Activated CD4-positive, alpha-beta memory T cell treated with anti-CD3 and anti-CD28 coated beads for 36 hours (primary cell): ENCODE measurements at regions of chr2 and their contacts with region 1.

Region 1: DNA sequence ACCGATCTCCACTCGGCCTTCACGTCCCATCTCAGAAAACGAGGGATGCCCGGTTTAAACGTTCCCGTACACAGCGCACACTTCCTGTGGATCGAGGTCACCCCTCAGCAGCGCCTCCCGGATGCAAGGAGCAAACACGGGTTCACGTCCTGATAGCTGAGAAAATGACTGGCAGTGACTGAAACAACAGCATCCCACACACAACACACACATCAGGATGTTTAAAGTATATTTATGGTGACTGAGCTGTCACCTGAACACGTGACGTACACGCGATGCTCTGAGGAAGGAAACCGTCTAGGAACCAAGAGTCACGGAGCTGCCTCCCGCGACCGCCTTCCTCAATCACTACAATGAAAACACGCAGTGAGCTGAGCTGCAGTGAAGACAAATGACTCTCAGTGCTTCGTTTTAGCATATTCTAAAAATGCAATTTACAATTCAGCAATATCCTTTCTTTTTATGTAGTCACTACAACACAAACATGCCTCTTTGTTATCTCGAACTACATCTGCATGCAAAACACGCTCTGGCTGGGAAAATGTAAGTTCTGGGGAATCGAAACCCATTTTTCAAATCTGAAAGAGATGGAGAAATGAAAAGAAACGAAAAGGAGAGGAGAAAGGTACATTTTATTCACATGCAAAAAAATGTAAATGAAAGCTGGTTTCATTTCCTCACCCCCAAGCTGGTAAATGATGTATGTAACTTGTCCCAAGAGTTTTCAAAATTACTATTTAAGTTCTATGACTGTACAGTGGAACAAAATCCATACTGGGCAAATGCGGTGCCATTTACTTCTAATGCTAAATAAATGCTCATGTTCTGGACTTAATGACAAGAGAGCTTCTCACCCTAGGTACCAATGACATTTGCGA is 19.8 kb downstream of the HDAC4 start:
- DNase-seq: peak; percentile 85
- H3K4me3 Mint-ChIP-seq: peak overlapping the region; percentile 65
- H3K27ac Mint-ChIP-seq: peak overlapping the region; percentile 94
- H3K4me1 Mint-ChIP-seq: peaks cover 41% of the 10 kb centered on the region
- H3K27me3 Mint-ChIP-seq: no peaks in the 10 kb centered on the region

Region 2: GRCh38 chr2:239257511-239257937 is 123.5 kb before region 1 on chr2:
- CTCF ChIA-PET with region 1: no interaction called
- POLR2A ChIA-PET with region 1: interaction called, 5 read pairs
- intact Hi-C with region 1: loop called (anchors 1 kb)
- DNase-seq: peak; percentile 44
- H3K4me3 Mint-ChIP-seq: no peak overlapping the region
- H3K27ac Mint-ChIP-seq: peak overlapping the region; percentile 79
- H3K4me1 Mint-ChIP-seq: peaks cover 86% of the 10 kb centered on the region
- H3K27me3 Mint-ChIP-seq: no peaks in the 10 kb centered on the region

Region 3: DNA sequence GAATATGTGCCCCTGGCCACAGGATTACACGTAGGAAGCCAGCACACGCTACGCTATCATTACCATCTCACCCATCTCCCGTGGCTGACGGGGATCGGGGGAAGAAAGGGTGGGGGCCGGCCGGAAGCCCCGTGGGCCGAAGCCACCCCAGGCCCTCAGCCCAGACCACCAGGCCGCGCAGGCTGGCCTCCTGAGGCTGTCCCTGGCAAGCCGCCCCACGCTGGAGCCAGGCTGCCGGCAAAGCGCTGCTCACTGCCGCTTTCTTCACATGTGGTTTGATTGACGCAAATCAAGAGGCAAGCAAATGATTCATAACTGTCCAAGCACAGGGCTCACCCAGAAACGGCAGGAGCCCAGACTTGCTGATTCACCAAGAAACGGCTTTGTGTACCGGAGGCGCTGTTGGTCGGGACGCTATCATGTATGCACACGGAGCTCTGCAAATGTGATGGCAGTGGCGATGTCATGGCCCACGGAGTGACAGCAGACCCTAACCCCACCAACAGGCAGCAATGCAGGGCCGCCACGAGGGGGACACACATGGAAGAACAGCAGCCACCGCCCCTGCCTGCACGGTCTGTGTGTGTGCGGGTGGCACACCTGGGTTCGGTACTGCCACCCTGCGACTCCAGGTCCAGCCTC is 105.9 kb before region 1 on chr2:
- CTCF ChIA-PET with region 1: interaction called, 3 read pairs
- POLR2A ChIA-PET with region 1: interaction called, 9 read pairs
- intact Hi-C with region 1: loop called (anchors 2 kb)
- DNase-seq: peak; percentile 92
- H3K4me3 Mint-ChIP-seq: peak overlapping the region; percentile 61
- H3K27ac Mint-ChIP-seq: peak overlapping the region; percentile 75
- H3K4me1 Mint-ChIP-seq: peaks cover 48% of the 10 kb centered on the region
- H3K27me3 Mint-ChIP-seq: peaks cover 29% of the 10 kb centered on the region

Region 4: GRCh38 chr2:239303711-239304532 is 77.1 kb before region 1 on chr2:
- CTCF ChIA-PET with region 1: interaction called, 6 read pairs
- POLR2A ChIA-PET with region 1: interaction called, 6 read pairs
- intact Hi-C with region 1: loop called (anchors 1 kb)
- DNase-seq: peak; percentile 44
- H3K4me3 Mint-ChIP-seq: no peak overlapping the region
- H3K27ac Mint-ChIP-seq: no peak overlapping the region
- H3K4me1 Mint-ChIP-seq: peaks cover 30% of the 10 kb centered on the region
- H3K27me3 Mint-ChIP-seq: peaks cover 1% of the 10 kb centered on the region

Region 5: GRCh38 chr2:239326831-239327535 is 54.1 kb before region 1 on chr2:
- CTCF ChIA-PET with region 1: interaction called, 3 read pairs
- POLR2A ChIA-PET with region 1: no interaction called
- intact Hi-C with region 1: loop called (anchors 1 kb)
- DNase-seq: peak; percentile 90
- H3K4me3 Mint-ChIP-seq: peak overlapping the region; percentile 35
- H3K27ac Mint-ChIP-seq: peak overlapping the region; percentile 82
- H3K4me1 Mint-ChIP-seq: peaks cover 61% of the 10 kb centered on the region
- H3K27me3 Mint-ChIP-seq: no peaks in the 10 kb centered on the region

Region 6: DNA sequence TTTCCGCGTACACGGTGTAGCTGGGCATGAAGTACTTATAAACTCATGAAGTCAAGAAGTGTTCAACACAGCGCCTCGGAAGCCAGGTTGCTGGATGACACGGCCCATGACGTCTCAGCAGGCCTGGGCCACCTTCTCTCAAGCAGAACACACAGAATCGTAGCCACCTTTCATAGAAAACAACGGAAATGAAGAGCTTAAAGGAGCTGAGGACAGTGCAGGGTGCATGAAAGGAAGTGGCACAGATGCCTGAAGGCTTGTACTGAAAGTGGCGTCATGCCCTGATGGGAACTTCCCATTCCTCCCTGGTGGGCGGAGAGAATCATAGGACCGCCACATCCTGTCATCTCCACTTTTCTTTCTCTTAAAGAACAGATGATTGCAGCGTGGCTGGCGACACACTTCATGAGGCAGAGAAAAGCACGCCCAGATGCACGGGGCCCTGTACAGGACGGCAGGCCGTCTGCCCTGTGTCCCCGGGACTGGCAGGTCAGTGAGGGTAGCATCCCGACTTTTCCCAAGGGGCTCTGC is 11.4 kb before region 1 on chr2:
- CTCF ChIA-PET with region 1: interaction called, 24 read pairs
- POLR2A ChIA-PET with region 1: interaction called, 33 read pairs
- intact Hi-C with region 1: loop called (anchors 1 kb)
- DNase-seq: peak; percentile 93
- H3K4me3 Mint-ChIP-seq: peak overlapping the region; percentile 68
- H3K27ac Mint-ChIP-seq: peak overlapping the region; percentile 92
- H3K4me1 Mint-ChIP-seq: peaks cover 8% of the 10 kb centered on the region
- H3K27me3 Mint-ChIP-seq: no peaks in the 10 kb centered on the region